Naive thymus-derived CD4-positive, alpha-beta T cell (primary cell): ENCODE measurements at regions of chr13 and their contacts with region 1.

Region 1: GRCh38 chr13:47004540-47004939 is 107.7 kb upstream of the HTR2A start:
- DNase-seq: no peak
- ATAC-seq: no peak
- H3K4me3 ChIP-seq: no peak overlapping the region
- H3K4me3 Mint-ChIP-seq: no peak overlapping the region
- H3K27ac ChIP-seq: no peak overlapping the region
- H3K27ac Mint-ChIP-seq: no peak overlapping the region
- H3K4me1 ChIP-seq: no peaks in the 10 kb centered on the region
- H3K4me1 Mint-ChIP-seq: no peaks in the 10 kb centered on the region
- H3K27me3 ChIP-seq: no peaks in the 10 kb centered on the region
- H3K27me3 Mint-ChIP-seq: peaks cover 4 to 47% (median 29%) of the 10 kb centered on the region in 5 donors

Region 2: GRCh38 chr13:46721054-46721453 is 283.5 kb before region 1 on chr13:
- CTCF ChIA-PET with region 1: interaction called, 10 read pairs
- POLR2A ChIA-PET with region 1: no interaction called
- intact Hi-C with region 1: no loop called
- DNase-seq: peak in 7 of 9 donors; percentile 10 to 54 (median 44)
- ATAC-seq: peak; percentile 61
- H3K4me3 ChIP-seq: no peak overlapping the region
- H3K4me3 Mint-ChIP-seq: no peak overlapping the region
- H3K27ac ChIP-seq: no peak overlapping the region
- H3K27ac Mint-ChIP-seq: no peak overlapping the region
- H3K4me1 ChIP-seq: no peaks in the 10 kb centered on the region
- H3K4me1 Mint-ChIP-seq: peaks cover 0 to 5% (median 0%) of the 10 kb centered on the region in 7 donors
- H3K27me3 ChIP-seq: no peaks in the 10 kb centered on the region
- H3K27me3 Mint-ChIP-seq: no peaks in the 10 kb centered on the region